ENCODE measurements at regions of chr20 and their contacts with region 1.

Region 1: DNA sequence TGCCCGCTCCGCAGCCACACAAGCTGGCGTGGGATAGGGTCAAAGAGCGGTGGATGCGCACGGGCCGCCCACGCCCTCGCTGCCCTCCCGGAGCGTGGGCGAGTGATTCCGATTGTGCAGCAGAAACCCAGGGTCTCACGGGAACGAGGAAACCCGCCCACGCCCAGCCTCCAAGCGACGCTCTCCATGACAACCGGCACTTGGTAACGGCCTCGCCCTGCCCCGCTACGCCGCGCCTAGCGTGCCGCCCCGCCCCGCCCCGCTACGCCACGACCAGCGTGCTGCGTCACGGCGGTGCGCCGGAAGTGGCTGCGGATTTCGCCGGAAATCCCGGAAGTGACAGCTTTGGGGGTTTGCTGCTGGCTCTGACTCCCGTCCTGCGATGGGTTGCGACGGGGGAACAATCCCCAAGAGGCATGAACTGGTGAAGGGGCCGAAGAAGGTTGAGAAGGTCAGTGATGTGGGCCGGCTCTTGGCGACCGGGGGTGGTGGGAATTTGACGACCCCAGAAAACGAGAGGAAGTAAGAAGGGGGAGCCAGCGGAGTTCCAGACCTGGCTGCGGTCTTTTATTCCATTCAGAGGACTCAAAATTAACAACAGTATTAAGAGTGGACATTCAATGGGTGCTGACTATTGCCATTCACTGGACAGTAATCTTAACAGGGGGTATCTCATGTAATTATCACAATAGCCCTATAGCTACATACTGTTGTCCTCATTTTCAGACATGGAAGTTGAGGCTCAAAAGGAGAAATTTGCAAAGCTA is at the start of gene RTF2:
- DNase-seq: peak; percentile 100
- H3K4me3 ChIP-seq: peak within 1 kb of the TSS; percentile 100
- H3K27ac ChIP-seq: peak within 1 kb of the TSS; percentile 96
- H3K4me1 ChIP-seq: peaks cover 33% of the 10 kb centered on the region
- H3K27me3 ChIP-seq: no peaks in the 10 kb centered on the region
- total RNA-seq, gene RTF2: 128 and 141 TPM in 2 replicates

Region 2: DNA sequence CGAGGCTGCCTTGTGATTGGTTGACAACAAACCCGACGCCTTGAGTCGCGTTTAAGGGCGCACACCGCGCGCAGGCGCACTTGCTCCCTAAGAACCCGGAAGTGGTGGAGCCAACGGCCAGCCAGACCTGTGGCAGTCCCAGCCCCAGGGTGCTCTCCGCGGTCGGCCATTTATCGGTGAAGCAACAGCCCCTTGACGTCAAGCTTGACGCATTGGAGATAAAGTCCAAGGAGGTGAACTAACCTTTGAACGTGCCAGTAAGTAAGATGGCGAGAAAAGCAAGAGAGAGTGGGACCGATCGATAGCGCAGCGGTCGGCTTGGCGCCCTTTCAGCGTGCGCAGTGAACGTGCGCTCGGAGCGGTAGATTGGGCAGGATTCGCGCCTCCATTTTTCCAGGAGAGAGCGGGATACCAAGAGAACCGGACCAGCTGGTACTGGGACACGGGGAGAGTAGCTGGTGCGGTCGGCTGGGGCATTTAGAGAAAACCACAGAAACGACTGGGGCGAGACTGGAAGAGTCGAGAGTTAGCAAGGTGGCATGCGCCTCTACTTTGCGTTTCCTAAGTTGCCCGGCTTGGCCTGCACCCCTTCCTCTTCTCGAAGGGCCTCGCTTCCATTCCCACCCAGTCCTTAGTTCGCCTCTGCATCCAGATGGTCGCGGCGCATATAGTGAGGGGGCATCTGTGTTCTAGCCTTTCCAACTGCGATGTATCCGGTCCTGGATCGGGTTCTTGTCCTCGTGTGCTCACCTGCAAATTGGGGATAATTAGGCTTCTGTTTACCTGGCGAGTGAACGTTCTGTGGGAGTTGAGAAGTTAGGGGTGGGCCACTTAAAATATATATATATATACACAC is 76.0 kb before region 1 on chr20 and contains the start of gene CSTF1:
- in situ Hi-C with region 1: loop called (anchors 10 kb)
- DNase-seq: peak; percentile 99
- H3K4me3 ChIP-seq: peak within 1 kb of the TSS; percentile 96
- H3K27ac ChIP-seq: peak within 1 kb of the TSS; percentile 85
- H3K4me1 ChIP-seq: peaks cover 24% of the 10 kb centered on the region
- H3K27me3 ChIP-seq: no peaks in the 10 kb centered on the region
- total RNA-seq, gene CSTF1: 56.7 and 69.3 TPM in 2 replicates

Region 3: GRCh38 chr20:56909918-56910714 is 441.6 kb after region 1 on chr20:
- in situ Hi-C with region 1: no loop called
- DNase-seq: no peak
- H3K4me3 ChIP-seq: no peak overlapping the region
- H3K27ac ChIP-seq: no peak overlapping the region
- H3K4me1 ChIP-seq: no peaks in the 10 kb centered on the region
- H3K27me3 ChIP-seq: no peaks in the 10 kb centered on the region

Measured in GM23248 (cell line).